ENCODE measurements at regions of chr6 and their contacts with region 1.

Region 1: DNA sequence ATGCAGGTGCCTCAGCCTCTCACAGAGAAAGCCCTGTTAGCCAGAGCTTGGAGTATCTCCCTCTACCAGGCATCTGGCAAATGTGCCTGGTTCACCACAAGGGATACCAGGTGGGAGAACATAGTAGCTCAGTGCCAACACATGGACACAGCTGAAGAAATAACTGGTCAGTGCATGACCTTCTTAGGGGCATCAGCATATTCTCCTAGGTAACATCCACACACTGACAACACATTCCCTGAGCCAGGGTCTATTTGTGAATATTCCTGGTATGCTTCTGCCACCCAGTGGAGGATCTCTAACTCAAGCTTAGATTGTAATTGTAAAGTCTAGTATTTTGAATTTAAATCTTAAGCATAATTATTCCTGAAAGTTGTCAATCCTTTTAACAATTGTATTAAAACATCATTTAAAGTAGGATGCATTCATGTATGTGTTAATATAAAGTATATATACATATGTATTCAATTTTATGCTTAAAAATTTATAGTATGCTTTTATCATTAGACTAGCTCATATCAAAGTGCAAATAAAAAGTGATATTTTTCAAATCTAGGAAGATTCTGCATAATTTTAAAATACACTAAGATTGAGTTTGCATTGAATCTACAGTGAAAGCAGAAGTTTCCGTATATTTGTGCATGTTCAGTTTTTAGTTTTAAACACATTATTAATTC is 45.3 kb upstream of the COL21A1 start:
- DNase-seq: peak in 1 of 2 donors; percentile 42
- H3K4me3 ChIP-seq: no peak overlapping the region
- H3K27ac ChIP-seq: no peak overlapping the region
- H3K4me1 ChIP-seq: no peaks in the 10 kb centered on the region
- H3K27me3 ChIP-seq: no peaks in the 10 kb centered on the region
- CTCF ChIP-seq: peak; percentile 60 to 79 (median 62)
- POLR2A ChIP-seq: no peak

Region 2: GRCh38 chr6:55980627-55981211 is 311.9 kb before region 1 on chr6:
- intact Hi-C with region 1: loop called (anchors 5 kb)
- DNase-seq: peak in 1 of 2 donors; percentile 29
- H3K4me3 ChIP-seq: no peak overlapping the region
- H3K27ac ChIP-seq: no peak overlapping the region
- H3K4me1 ChIP-seq: no peaks in the 10 kb centered on the region
- H3K27me3 ChIP-seq: peaks cover 0 to 3% of the 10 kb centered on the region in 2 donors
- CTCF ChIP-seq: peak; percentile 57 to 80 (median 67)
- POLR2A ChIP-seq: no peak

Measured in uterus (tissue), 4 donors.